A673 (cell line): ENCODE measurements at regions of chr2 and their contacts with region 1.

Region 1: DNA sequence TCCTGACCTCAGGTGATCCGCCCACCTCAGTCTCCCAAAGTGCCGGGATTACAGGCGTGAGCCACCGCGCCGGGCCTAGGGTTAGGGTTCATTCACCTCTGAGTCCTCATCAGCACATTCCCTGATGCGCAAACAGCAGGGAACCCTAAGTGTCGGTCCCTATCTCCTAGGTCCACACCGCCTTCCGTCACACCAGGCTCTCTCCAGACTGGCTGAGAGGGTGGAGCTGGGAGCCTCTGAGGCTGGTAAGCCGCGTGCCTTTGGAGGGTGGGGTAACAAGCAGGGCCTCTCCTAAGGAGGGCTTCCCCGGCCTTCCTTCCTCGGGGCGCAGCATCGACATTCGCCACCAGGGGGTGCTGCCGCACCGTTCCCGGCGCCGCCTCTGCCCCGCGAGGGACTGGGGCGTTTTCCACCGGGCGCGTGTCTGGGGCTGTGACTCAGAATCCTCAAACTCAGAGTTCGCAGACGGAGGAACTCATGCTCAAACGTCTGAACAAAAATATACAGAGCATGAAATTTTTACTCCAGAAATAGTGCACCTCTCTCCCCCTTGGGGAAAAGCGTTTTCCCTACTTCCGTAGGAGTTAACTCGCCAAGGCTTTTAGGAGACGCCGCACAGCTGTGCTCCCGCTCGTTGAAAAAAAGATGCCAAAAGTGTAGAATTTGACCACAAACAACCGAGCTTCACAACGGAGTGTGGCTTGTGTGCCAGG is 63.9 kb upstream of the ASAP2 start:
- DNase-seq: peak; percentile 93
- H3K4me3 ChIP-seq: peak overlapping the region; percentile 34
- H3K27ac ChIP-seq: no peak overlapping the region
- H3K4me1 ChIP-seq: peaks cover 22% of the 10 kb centered on the region
- H3K27me3 ChIP-seq: no peaks in the 10 kb centered on the region
- CTCF ChIP-seq: peak; percentile 98

Region 2: GRCh38 chr2:7427293-7428060 is 1715.2 kb before region 1 on chr2:
- CTCF ChIA-PET with region 1: no interaction called
- POLR2A ChIA-PET with region 1: no interaction called
- intact Hi-C with region 1: loop called (anchors 5 kb)
- DNase-seq: peak; percentile 85
- H3K4me3 ChIP-seq: no peak overlapping the region
- H3K27ac ChIP-seq: no peak overlapping the region
- H3K4me1 ChIP-seq: peaks cover 8% of the 10 kb centered on the region
- H3K27me3 ChIP-seq: no peaks in the 10 kb centered on the region
- CTCF ChIP-seq: peak; percentile 79

Region 3: DNA sequence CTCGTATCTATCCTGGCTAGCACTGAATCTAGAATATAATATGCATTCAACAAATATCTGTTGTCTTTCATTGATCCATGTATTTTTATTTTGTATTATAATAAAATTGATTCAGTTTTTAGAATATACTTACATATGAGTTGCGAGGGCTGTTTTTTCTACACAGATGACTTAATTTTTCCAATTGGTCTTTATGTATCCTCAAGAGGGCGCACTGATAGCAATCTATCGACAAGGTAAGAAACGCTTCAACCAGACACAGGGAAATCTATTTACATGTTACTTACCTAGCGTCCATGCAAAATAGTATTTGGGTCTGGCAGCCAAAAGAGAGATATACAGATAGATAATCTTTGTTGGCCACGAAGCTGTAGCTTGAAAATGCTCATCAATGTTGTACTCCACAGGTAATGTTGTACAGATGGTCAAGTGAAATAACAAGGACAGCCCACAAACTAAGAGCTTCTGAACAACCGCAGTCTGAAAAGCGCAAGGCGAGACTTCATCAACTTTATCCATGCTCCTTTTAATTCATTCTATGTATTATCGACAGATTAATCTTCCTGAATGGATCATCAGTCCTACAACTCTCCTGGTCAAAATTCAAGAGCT is 269.8 kb before region 1 on chr2:
- CTCF ChIA-PET with region 1: interaction called, 10 read pairs
- POLR2A ChIA-PET with region 1: no interaction called
- intact Hi-C with region 1: loop called (anchors 2 kb)
- DNase-seq: peak; percentile 71
- H3K4me3 ChIP-seq: no peak overlapping the region
- H3K27ac ChIP-seq: no peak overlapping the region
- H3K4me1 ChIP-seq: no peaks in the 10 kb centered on the region
- H3K27me3 ChIP-seq: no peaks in the 10 kb centered on the region
- CTCF ChIP-seq: peak; percentile 74

Region 4: GRCh38 chr2:9333591-9334171 is 191.0 kb after region 1 on chr2:
- CTCF ChIA-PET with region 1: interaction called, 3 read pairs
- POLR2A ChIA-PET with region 1: no interaction called
- intact Hi-C with region 1: loop called (anchors 2 kb)
- DNase-seq: peak; percentile 89
- H3K4me3 ChIP-seq: no peak overlapping the region
- H3K27ac ChIP-seq: no peak overlapping the region
- H3K4me1 ChIP-seq: peaks cover 19% of the 10 kb centered on the region
- H3K27me3 ChIP-seq: no peaks in the 10 kb centered on the region
- CTCF ChIP-seq: peak; percentile 79

Region 5: DNA sequence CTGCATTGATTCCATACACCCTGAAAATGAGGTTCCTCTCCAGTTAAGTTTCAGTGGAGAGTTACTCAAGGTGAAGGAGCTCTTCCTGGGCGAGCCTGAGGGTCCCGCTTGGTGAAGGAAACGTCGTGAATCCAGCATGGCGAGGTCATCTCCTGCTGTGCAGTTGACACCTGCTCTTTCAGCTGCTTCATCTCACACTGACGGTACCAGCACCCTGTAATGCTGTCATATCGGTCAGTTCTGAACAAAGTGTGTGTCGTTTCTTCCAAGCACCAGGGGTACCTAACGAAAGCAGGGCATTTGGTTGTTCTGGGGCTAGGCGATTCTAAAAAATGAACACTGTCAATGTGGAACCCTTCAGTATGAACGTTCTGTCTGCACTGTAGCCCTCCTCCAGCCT is 228.0 kb after region 1 on chr2:
- CTCF ChIA-PET with region 1: interaction called, 28 read pairs
- POLR2A ChIA-PET with region 1: no interaction called
- intact Hi-C with region 1: loop called (anchors 2 kb)
- DNase-seq: no peak
- H3K4me3 ChIP-seq: no peak overlapping the region
- H3K27ac ChIP-seq: no peak overlapping the region
- H3K4me1 ChIP-seq: no peaks in the 10 kb centered on the region
- H3K27me3 ChIP-seq: no peaks in the 10 kb centered on the region
- CTCF ChIP-seq: no peak

Region 6: GRCh38 chr2:9423100-9423921 is 280.6 kb after region 1 on chr2 and contains the starts of genes CPSF3 and ITGB1BP1:
- CTCF ChIA-PET with region 1: no interaction called
- POLR2A ChIA-PET with region 1: no interaction called
- intact Hi-C with region 1: loop called (anchors 5 kb)
- DNase-seq: peak; percentile 99
- H3K4me3 ChIP-seq: peak within 1 kb of the TSS; percentile 79
- H3K27ac ChIP-seq: peak within 1 kb of the TSS; percentile 83
- H3K4me1 ChIP-seq: peaks cover 15% of the 10 kb centered on the region
- H3K27me3 ChIP-seq: no peaks in the 10 kb centered on the region
- CTCF ChIP-seq: no peak
- total RNA-seq, gene CPSF3: 86.8 and 87.2 TPM in 2 replicates
- total RNA-seq, gene ITGB1BP1: 115 and 138 TPM in 2 replicates

Region 7: GRCh38 chr2:9474361-9474967 is 331.8 kb after region 1 on chr2 and contains the start of gene IAH1:
- CTCF ChIA-PET with region 1: no interaction called
- POLR2A ChIA-PET with region 1: no interaction called
- intact Hi-C with region 1: loop called (anchors 1 kb)
- DNase-seq: peak; percentile 61
- H3K4me3 ChIP-seq: peak within 1 kb of the TSS; percentile 99
- H3K27ac ChIP-seq: peak within 1 kb of the TSS; percentile 85
- H3K4me1 ChIP-seq: no peaks in the 10 kb centered on the region
- H3K27me3 ChIP-seq: no peaks in the 10 kb centered on the region
- CTCF ChIP-seq: no peak
- total RNA-seq, gene IAH1: 54.9 and 55.3 TPM in 2 replicates